A549 (cell line): ENCODE measurements at regions of chr3 and their contacts with region 1.

Region 1: GRCh38 chr3:49171119-49171774 is at the start of gene KLHDC8B:
- DNase-seq: peak; percentile 73 to 76
- ATAC-seq: peak; percentile 83 to 93
- H3K4me3 ChIP-seq: peak within 1 kb of the TSS; percentile 66
- H3K27ac ChIP-seq: peak within 1 kb of the TSS; percentile 81 to 87
- H3K4me1 ChIP-seq: peaks cover 25% of the 10 kb centered on the region
- CTCF ChIP-seq: peak; percentile 85
- EP300 ChIP-seq: no peak
- POLR2A ChIP-seq: peak; percentile 39; the same call in 1 of the 2 replicates
- RAD21 ChIP-seq: peak; percentile 66 to 80
- polyA plus RNA-seq, gene KLHDC8B: 6.7 and 7.4 TPM in 2 replicates

Region 2: DNA sequence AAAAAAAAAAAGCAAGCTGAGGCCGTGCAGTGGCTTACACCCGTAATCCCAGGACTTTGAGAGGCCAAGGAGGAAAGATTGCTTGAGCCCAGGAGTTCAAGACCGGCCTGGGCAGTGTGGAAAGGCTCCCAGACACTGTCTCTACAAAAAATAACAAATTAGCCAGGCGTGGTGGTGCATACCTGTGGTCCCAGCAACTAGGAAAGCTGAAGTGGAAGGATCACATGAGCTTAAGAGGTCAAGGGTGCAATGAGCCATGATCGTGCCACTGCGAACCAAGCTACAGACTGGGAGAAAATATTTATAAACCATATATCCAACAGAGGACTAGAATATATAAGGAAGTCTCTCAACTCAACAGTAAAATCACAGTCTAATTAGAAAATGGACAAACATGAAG is 10.1 kb after region 1 on chr3:
- CTCF ChIA-PET with region 1: interaction called, 13 read pairs
- POLR2A ChIA-PET with region 1: no interaction called
- DNase-seq: no peak
- ATAC-seq: no peak
- H3K4me3 ChIP-seq: no peak overlapping the region
- H3K27ac ChIP-seq: no peak overlapping the region
- H3K4me1 ChIP-seq: no peaks in the 10 kb centered on the region
- CTCF ChIP-seq: no peak
- EP300 ChIP-seq: no peak
- POLR2A ChIP-seq: no peak
- RAD21 ChIP-seq: no peak

Region 3: DNA sequence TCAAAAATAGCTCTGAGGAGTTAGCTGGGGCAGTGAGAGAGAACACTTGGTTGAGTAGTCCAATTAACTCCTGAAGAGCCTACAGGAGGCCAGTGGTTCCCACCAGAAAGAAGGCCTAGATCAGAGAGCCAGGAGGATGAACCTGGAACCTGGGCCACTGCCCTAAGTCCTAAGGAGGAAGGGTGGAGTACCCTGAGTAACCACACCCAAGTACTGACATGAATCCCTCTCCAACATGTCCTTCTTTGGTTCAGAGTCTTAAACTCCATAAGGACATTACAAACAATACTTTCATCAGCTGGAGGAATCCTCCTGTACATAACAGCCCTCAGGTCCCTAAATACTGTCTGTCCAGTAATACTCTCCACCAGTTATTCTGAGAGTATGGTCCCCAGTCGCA is 131.4 kb after region 1 on chr3:
- CTCF ChIA-PET with region 1: interaction called, 11 read pairs
- POLR2A ChIA-PET with region 1: no interaction called
- DNase-seq: no peak
- ATAC-seq: no peak
- H3K4me3 ChIP-seq: no peak overlapping the region
- H3K27ac ChIP-seq: no peak overlapping the region
- H3K4me1 ChIP-seq: peaks cover 9% of the 10 kb centered on the region; the same call in 2 of the 3 replicates
- CTCF ChIP-seq: no peak
- EP300 ChIP-seq: no peak
- POLR2A ChIP-seq: no peak
- RAD21 ChIP-seq: no peak